SK-N-SH (cell line): ENCODE measurements at regions of chr3 and their contacts with region 1.

Region 1: GRCh38 chr3:195271116-195271858 is at the start of gene XXYLT1:
- DNase-seq: peak; percentile 96
- H3K4me3 ChIP-seq: peak within 1 kb of the TSS; percentile 84 to 86
- H3K27ac ChIP-seq: peak within 1 kb of the TSS; percentile 82 to 94
- H3K4me1 ChIP-seq: peaks cover 0 to 22% of the 10 kb centered on the region in 2 experiments; a peak in 2 of 4 replicates
- H3K27me3 ChIP-seq: no peaks in the 10 kb centered on the region
- CTCF ChIP-seq: peak; percentile 96
- EP300 ChIP-seq: no peak
- RAD21 ChIP-seq: peak; percentile 94
- polyA plus RNA-seq, gene XXYLT1: 22.1 and 22.6 TPM in 2 replicates

Region 2: GRCh38 chr3:194671900-194672808 is 599.1 kb before region 1 on chr3 and contains the start of gene LSG1:
- CTCF ChIA-PET with region 1: interaction called, 45 read pairs
- POLR2A ChIA-PET with region 1: interaction called, 5 read pairs
- DNase-seq: peak; percentile 89
- H3K4me3 ChIP-seq: peak within 1 kb of the TSS; percentile 94 to 95
- H3K27ac ChIP-seq: peak within 1 kb of the TSS; percentile 83 to 92
- H3K4me1 ChIP-seq: peaks cover 10 to 12% of the 10 kb centered on the region in 2 experiments; a peak in 3 of 4 replicates
- H3K27me3 ChIP-seq: no peaks in the 10 kb centered on the region
- CTCF ChIP-seq: no peak
- EP300 ChIP-seq: peak; percentile 18 to 57; a peak in 1 of 4 replicates
- RAD21 ChIP-seq: no peak
- polyA plus RNA-seq, gene LSG1: 35.1 and 43.7 TPM in 2 replicates

Region 3: DNA sequence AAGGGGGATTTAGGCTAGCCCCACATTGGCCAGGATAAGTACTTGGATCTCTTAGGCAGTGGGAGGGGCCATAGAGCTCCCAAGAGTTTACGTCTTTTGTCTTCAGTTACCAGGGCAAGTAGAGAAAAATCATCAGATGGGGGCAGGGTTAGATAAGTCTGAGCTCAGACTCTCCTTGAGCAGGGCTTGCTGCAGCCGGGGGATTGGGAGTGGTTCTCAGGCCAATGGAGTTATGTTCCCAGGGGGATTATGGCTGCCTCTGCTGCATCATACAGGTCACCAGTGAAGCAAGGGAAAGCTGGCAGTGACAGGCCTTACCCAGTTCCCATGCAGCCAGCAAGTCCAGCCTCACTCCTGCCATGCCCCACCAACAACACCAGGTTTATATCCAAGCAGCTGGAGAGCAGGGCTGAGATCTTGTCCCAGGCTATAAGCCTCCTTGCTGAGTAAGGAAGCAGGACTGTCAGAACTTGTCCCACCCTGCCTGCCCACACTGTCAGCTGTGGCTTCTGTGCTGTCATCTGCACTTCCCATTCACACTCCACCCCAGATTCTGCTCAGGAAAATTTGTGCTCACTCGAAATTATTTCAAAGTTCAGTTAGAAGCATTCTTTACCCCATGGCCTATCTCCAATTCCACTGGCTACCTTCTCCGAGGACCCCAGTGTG is 370.3 kb before region 1 on chr3:
- CTCF ChIA-PET with region 1: no interaction called
- POLR2A ChIA-PET with region 1: no interaction called
- DNase-seq: no peak
- H3K4me3 ChIP-seq: no peak overlapping the region
- H3K27ac ChIP-seq: no peak overlapping the region
- H3K4me1 ChIP-seq: no peaks in the 10 kb centered on the region
- H3K27me3 ChIP-seq: no peaks in the 10 kb centered on the region
- CTCF ChIP-seq: no peak
- EP300 ChIP-seq: no peak
- RAD21 ChIP-seq: no peak

Region 4: DNA sequence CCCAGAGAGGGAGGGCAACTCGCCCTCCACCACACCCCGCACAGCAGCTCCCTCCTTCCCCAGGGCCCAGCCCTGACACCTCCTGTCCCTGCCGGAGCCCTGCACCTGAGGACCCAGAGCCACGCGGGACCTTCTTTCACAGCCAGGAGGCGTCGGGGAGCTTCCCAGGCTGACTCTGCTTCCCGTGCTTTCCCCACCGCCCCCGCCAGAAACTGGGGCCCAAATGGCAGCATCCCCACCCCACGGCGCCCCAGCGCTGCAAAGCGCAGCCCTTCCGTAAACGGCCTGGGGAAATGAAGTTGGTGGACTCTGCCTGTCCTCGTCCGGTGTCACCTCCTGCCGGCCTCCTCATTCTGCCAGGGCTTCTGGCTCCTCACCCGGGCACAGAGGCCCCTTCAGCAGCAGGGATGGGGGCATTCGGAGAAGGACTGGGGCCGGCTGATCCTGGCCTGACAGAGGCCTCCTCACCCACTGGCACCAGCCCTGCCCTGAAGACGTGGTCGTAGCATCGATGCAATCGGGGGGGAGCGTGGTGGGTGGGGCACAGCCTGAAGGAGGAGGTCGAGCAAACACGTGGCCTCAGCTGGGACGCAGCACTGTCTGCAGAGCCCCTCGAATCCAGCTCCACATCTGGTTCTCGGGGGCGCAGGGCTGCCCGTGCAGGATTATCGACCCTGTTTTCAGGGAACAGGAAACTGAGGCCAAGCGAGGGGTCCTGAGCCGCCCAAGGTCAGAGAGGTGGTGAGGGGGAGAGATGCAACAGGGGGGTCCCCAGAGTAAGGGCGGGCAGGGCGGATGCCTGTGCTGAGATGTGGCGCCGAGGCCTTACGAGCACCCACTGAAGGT is 235.7 kb before region 1 on chr3:
- CTCF ChIA-PET with region 1: no interaction called
- POLR2A ChIA-PET with region 1: no interaction called
- DNase-seq: peak; percentile 49
- H3K4me3 ChIP-seq: no peak overlapping the region
- H3K27ac ChIP-seq: no peak overlapping the region
- H3K4me1 ChIP-seq: peaks cover 9 to 12% of the 10 kb centered on the region in 2 experiments; a peak in 2 of 4 replicates
- H3K27me3 ChIP-seq: no peaks in the 10 kb centered on the region; the same call in 1 of the 2 replicates
- CTCF ChIP-seq: peak; percentile 25; the same call in 1 of the 2 replicates
- EP300 ChIP-seq: no peak
- RAD21 ChIP-seq: peak; percentile 23; the same call in 1 of the 2 replicates

Region 5: GRCh38 chr3:195259475-195260279 is 11.6 kb before region 1 on chr3:
- CTCF ChIA-PET with region 1: interaction called, 19 read pairs
- POLR2A ChIA-PET with region 1: interaction called, 3 read pairs
- DNase-seq: peak; percentile 98
- H3K4me3 ChIP-seq: peak overlapping the region; percentile 63 to 72
- H3K27ac ChIP-seq: peak overlapping the region; percentile 83 to 97
- H3K4me1 ChIP-seq: peaks cover 18 to 57% of the 10 kb centered on the region in 2 experiments
- H3K27me3 ChIP-seq: no peaks in the 10 kb centered on the region
- CTCF ChIP-seq: peak; percentile 40
- EP300 ChIP-seq: peak in 1 of 2 experiments; percentile 45; a peak in 1 of 4 replicates
- RAD21 ChIP-seq: peak; percentile 65

Region 6: GRCh38 chr3:195442573-195443390 is 171.5 kb after region 1 on chr3 and contains the start of gene ACAP2:
- CTCF ChIA-PET with region 1: interaction called, 23 read pairs
- POLR2A ChIA-PET with region 1: interaction called, 7 read pairs
- DNase-seq: peak; percentile 100
- H3K4me3 ChIP-seq: peak within 1 kb of the TSS; percentile 74 to 85
- H3K27ac ChIP-seq: peak within 1 kb of the TSS; percentile 84 to 85
- H3K4me1 ChIP-seq: peaks cover 0 to 10% of the 10 kb centered on the region in 2 experiments; a peak in 2 of 4 replicates
- H3K27me3 ChIP-seq: no peaks in the 10 kb centered on the region
- CTCF ChIP-seq: no peak
- EP300 ChIP-seq: no peak
- RAD21 ChIP-seq: no peak
- polyA plus RNA-seq, gene ACAP2: 6.8 and 9.6 TPM in 2 replicates

Region 7: DNA sequence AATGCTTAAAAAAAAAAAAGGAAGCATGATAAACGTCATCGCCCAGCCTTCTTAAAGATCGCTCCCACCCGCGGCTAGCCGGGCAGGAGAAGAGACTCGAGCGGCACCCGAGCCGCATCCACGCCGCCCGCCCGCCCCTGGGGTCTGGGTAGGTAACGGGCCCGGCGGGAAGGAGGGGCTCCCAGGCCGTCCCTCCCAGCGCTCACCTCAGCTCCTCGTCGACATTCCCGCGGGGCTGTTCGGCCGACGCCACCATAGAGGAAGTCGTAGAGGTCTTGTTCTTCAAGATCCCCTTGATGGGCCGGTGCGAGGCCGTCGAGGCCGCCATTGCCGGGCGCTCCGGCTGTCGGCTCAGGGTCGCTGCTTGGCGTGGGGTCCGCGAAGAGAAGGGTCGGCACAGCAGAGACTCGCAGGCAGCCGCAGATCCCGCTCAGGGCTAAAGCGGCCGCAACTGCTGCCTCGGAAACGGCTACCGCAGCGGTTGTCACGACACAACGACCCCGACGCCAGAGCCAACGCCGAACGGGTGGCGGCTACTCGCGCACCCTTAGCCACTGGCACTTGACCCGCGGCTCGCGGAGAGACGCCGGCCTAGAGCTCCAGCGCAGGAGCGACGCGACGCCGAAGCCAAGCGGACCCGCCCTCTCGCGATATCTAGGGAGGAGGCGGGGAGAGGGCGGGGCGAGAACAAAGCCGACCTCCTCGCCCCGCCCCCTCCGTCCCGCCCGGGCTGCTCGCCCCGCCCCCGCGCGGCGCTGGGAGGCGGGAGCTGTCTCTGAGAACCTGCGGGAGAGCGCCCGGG is 271.6 kb after region 1 on chr3 and contains the start of gene PPP1R2:
- CTCF ChIA-PET with region 1: interaction called, 20 read pairs
- POLR2A ChIA-PET with region 1: interaction called, 10 read pairs
- DNase-seq: peak; percentile 98
- H3K4me3 ChIP-seq: peak within 1 kb of the TSS; percentile 89 to 94
- H3K27ac ChIP-seq: peak within 1 kb of the TSS; percentile 68 to 78
- H3K4me1 ChIP-seq: peaks cover 23 to 24% of the 10 kb centered on the region in 2 experiments
- H3K27me3 ChIP-seq: no peaks in the 10 kb centered on the region
- CTCF ChIP-seq: no peak
- EP300 ChIP-seq: no peak
- RAD21 ChIP-seq: no peak
- polyA plus RNA-seq, gene PPP1R2: 6.9 and 8.1 TPM in 2 replicates